AG04449 (cell line): ENCODE measurements at regions of chr12 and their contacts with region 1.

Region 1: GRCh38 chr12:15856097-15856982 is 25.8 kb upstream of the STRAP start:
- DNase-seq: no peak
- H3K4me3 ChIP-seq: no peak overlapping the region
- CTCF ChIP-seq: peak; percentile 49

Region 2: GRCh38 chr12:15522565-15523187 is 333.7 kb before region 1 on chr12:
- CTCF ChIA-PET with region 1: interaction called, 12 read pairs
- POLR2A ChIA-PET with region 1: no interaction called
- DNase-seq: no peak
- H3K4me3 ChIP-seq: no peak overlapping the region
- CTCF ChIP-seq: peak; percentile 22

Region 3: GRCh38 chr12:15563663-15564062 is 292.7 kb before region 1 on chr12:
- CTCF ChIA-PET with region 1: interaction called, 12 read pairs
- POLR2A ChIA-PET with region 1: no interaction called
- DNase-seq: no peak
- H3K4me3 ChIP-seq: no peak overlapping the region
- CTCF ChIP-seq: no peak

Region 4: GRCh38 chr12:15842108-15842507 is 14.2 kb before region 1 on chr12:
- CTCF ChIA-PET with region 1: interaction called, 18 read pairs
- POLR2A ChIA-PET with region 1: no interaction called
- DNase-seq: peak; percentile 65
- H3K4me3 ChIP-seq: no peak overlapping the region
- CTCF ChIP-seq: no peak